ENCODE measurements at regions of chr12 and their contacts with region 1.

Region 1: GRCh38 chr12:27821259-27821973 is 41.4 kb upstream of the MANSC4 start:
- DNase-seq: peak; percentile 51
- H3K4me3 ChIP-seq: peak overlapping the region in 1 of 2 experiments; percentile 30; a peak in 2 of 4 replicates
- H3K27ac ChIP-seq: peak overlapping the region in 1 of 2 experiments; percentile 59; a peak in 2 of 4 replicates
- H3K4me1 ChIP-seq: peaks cover 4 to 19% of the 10 kb centered on the region in 2 experiments; a peak in 3 of 4 replicates
- H3K27me3 ChIP-seq: no peaks in the 10 kb centered on the region
- CTCF ChIP-seq: peak; percentile 72
- EP300 ChIP-seq: no peak
- RAD21 ChIP-seq: peak; percentile 70

Region 2: DNA sequence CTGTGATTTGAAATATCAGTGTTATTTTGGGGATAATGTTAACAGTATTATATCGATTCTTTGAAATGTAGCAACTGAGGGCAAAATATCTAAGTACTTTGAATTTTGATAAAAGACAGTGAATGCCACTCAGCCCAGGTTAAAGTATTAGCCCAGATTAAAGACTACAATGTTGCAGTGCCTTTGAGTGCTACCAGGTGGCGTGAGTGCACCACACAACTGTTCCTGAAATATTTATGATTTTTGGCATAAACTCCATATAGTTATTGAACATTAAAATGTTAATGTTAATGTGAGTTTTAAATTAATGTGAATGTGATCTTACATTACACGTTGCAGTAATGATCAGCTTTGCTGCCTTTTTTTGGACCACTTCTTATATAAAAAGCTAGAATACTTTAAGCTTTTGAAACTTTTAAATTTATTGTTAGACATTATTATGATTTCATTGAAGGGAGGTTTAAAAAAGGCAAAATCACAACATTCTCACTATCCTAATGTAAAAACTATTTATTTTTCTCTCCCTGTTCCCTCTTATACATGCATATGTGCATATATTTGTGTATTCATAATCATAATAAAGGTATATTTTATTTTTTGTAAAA is 88.3 kb before region 1 on chr12:
- CTCF ChIA-PET with region 1: interaction called, 92 read pairs
- POLR2A ChIA-PET with region 1: no interaction called
- DNase-seq: peak; percentile 55
- H3K4me3 ChIP-seq: no peak overlapping the region; a peak in 1 of 4 replicates
- H3K27ac ChIP-seq: no peak overlapping the region
- H3K4me1 ChIP-seq: peaks cover 0 to 7% of the 10 kb centered on the region in 2 experiments; a peak in 2 of 4 replicates
- H3K27me3 ChIP-seq: no peaks in the 10 kb centered on the region
- CTCF ChIP-seq: peak; percentile 97
- EP300 ChIP-seq: no peak
- RAD21 ChIP-seq: peak; percentile 95

Region 3: DNA sequence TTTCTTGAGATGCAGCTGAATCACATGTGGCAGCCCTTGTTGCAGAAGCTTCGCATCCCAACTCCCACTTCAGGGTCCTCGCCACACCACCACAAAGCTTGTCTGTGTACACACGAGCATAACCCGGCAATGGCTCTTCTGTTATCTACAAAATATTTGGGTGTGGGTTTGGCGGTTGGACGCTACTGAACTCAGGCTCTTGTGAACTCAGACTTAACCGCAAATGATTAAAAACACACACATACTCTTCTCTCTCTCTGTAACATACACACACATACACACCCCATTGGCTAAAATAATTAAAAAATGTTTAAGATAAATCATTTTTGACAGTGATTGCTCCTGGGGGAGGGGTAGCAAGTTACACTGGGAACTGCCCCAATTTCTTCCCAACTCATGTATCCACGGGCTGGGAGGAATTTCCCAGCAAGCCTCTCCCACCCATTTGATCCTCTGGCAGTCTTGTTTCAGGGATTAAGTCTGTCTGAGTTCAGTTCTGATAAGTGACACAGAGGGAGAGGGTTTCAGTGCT is 22.4 kb after region 1 on chr12:
- CTCF ChIA-PET with region 1: interaction called, 16 read pairs
- POLR2A ChIA-PET with region 1: interaction called, 5 read pairs
- DNase-seq: no peak
- H3K4me3 ChIP-seq: no peak overlapping the region
- H3K27ac ChIP-seq: no peak overlapping the region
- H3K4me1 ChIP-seq: peaks cover 0 to 8% of the 10 kb centered on the region in 2 experiments; a peak in 2 of 4 replicates
- H3K27me3 ChIP-seq: no peaks in the 10 kb centered on the region
- CTCF ChIP-seq: no peak
- EP300 ChIP-seq: no peak
- RAD21 ChIP-seq: no peak

Measured in SK-N-SH (cell line).